ENCODE measurements at regions of chr9 and their contacts with region 1.

Region 1: GRCh38 chr9:71403106-71403505 is 281.7 kb upstream of the TRPM3 start:
- DNase-seq: no peak
- H3K4me3 ChIP-seq: no peak overlapping the region
- H3K27ac ChIP-seq: no peak overlapping the region
- H3K4me1 ChIP-seq: no peaks in the 10 kb centered on the region
- H3K27me3 ChIP-seq: no peaks in the 10 kb centered on the region
- CTCF ChIP-seq: no peak

Region 2: DNA sequence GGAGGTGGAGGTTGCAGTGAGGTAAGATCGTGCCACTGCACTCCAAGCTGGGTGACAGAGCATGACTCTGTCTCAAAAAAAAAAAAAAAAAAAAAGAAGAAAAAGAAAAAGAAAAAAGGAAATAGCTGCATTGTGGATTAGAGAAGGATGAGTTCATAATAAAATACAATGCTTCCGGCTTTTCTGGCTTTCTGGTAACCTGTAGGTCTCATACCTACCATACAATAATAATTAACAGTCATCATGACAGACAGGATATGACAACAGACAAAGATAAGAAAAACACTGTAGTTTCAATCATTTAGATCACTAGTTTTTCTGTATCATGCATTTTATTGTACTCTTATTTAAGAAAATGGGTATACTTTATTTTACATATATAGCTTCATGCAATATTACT is 241.0 kb before region 1 on chr9:
- CTCF ChIA-PET with region 1: no interaction called
- dilution Hi-C with region 1: no loop called
- in situ Hi-C with region 1: no loop called
- intact Hi-C with region 1: no loop called
- DNase-seq: no peak
- H3K4me3 ChIP-seq: no peak overlapping the region
- H3K27ac ChIP-seq: no peak overlapping the region
- H3K4me1 ChIP-seq: no peaks in the 10 kb centered on the region
- H3K27me3 ChIP-seq: no peaks in the 10 kb centered on the region
- CTCF ChIP-seq: no peak

Region 3: DNA sequence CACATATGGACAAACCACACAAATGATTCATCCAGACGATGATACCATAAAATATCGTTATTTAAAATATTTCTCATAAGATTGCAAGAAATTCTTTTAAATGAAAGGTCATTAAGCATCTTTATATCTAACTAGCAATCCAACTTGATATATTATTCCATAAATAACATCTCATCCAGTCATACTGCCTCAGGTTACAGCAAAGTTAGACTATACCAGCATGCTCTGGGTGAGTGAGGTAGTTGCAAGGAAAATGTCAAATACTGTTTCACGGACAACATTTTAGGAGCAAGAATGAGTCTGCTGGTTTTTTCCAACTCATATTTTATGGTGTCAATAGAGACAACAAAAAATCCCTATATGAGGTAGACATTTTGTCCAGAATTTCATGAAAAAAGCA is 80.8 kb before region 1 on chr9:
- CTCF ChIA-PET with region 1: no interaction called
- dilution Hi-C with region 1: loop called (anchors 5 kb)
- in situ Hi-C with region 1: no loop called
- intact Hi-C with region 1: no loop called
- DNase-seq: no peak
- H3K4me3 ChIP-seq: no peak overlapping the region
- H3K27ac ChIP-seq: no peak overlapping the region
- H3K4me1 ChIP-seq: peaks cover 4% of the 10 kb centered on the region
- H3K27me3 ChIP-seq: no peaks in the 10 kb centered on the region
- CTCF ChIP-seq: no peak

Measured in mammary epithelial cell (primary cell).